ENCODE measurements at regions of chr1 and their contacts with region 1.

Region 1: GRCh38 chr1:167553136-167554027 is at the start of gene CREG1:
- DNase-seq: peak; percentile 93
- H3K4me3 Mint-ChIP-seq: peak within 1 kb of the TSS; percentile 79
- H3K27ac Mint-ChIP-seq: no peak within 1 kb of the TSS
- H3K4me1 Mint-ChIP-seq: peaks cover 40% of the 10 kb centered on the region
- H3K27me3 Mint-ChIP-seq: no peaks in the 10 kb centered on the region
- total RNA-seq, gene CREG1: 9.6 to 10.7 TPM

Region 2: GRCh38 chr1:166910396-166910994 is 642.9 kb before region 1 on chr1:
- CTCF ChIA-PET with region 1: interaction called, 3 read pairs
- intact Hi-C with region 1: loop called (anchors 5 kb)
- DNase-seq: peak; percentile 90
- H3K4me3 Mint-ChIP-seq: no peak overlapping the region
- H3K27ac Mint-ChIP-seq: no peak overlapping the region
- H3K4me1 Mint-ChIP-seq: peaks cover 5% of the 10 kb centered on the region
- H3K27me3 Mint-ChIP-seq: no peaks in the 10 kb centered on the region

Region 3: DNA sequence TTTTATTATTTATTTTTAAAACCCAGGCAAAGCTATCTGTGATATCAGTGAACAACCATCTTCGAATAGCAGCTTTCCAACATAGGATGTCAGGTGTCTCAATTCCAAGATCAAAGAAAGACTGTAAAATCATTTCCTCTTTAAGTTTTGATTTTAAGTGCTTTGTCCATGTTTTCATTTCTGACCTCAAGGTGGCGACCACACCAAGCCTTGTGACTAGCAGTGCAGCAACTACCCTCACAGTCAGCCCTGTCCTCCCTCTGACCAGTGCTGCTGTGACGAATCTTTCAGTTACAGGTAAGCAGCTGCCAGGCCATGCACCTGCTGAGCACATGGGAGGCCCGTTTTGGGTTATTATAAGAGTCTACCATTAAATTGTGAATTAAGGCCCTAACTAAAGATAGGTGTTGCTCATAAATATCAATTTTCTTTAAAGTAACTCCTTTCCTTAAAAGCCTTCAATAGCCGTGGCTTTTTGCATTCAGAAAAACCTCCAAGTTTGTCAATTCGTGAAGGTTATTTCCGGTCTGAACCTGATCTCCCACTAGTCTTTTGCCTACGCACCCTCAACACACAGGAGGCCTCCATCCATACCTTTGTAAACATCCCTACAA is 152.0 kb before region 1 on chr1:
- CTCF ChIA-PET with region 1: interaction called, 19 read pairs
- intact Hi-C with region 1: no loop called
- DNase-seq: peak; percentile 70
- H3K4me3 Mint-ChIP-seq: no peak overlapping the region
- H3K27ac Mint-ChIP-seq: no peak overlapping the region
- H3K4me1 Mint-ChIP-seq: no peaks in the 10 kb centered on the region
- H3K27me3 Mint-ChIP-seq: no peaks in the 10 kb centered on the region

Region 4: DNA sequence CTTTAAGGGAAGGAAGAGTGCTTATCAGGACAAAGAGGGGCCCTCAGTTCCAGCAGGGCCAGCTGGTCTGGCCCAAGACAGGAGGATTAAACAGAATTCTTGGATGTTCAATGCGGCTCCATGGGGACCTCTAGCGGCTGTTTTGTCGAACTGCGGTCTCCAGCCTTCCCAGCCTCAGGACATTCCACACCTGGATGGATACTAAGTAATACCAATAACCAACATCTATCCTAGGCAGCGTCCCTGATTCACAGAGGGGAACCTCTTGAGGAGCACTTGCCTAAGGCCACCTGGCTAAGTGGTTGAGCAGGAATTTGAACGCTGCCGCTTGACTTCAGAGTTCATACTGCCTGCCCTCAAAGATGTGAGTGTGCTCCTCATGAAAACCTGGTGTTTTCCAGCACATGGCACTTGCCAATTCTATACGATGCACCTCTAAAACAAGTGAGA is 19.5 kb before region 1 on chr1:
- CTCF ChIA-PET with region 1: interaction called, 14 read pairs
- intact Hi-C with region 1: no loop called
- DNase-seq: peak; percentile 78
- H3K4me3 Mint-ChIP-seq: no peak overlapping the region
- H3K27ac Mint-ChIP-seq: no peak overlapping the region
- H3K4me1 Mint-ChIP-seq: peaks cover 4% of the 10 kb centered on the region
- H3K27me3 Mint-ChIP-seq: peaks cover 2% of the 10 kb centered on the region

Region 5: GRCh38 chr1:167599957-167600581 is 46.7 kb after region 1 on chr1:
- CTCF ChIA-PET with region 1: interaction called, 5 read pairs
- intact Hi-C with region 1: loop called (anchors 1 kb)
- DNase-seq: peak; percentile 71
- H3K4me3 Mint-ChIP-seq: peak overlapping the region; percentile 45
- H3K27ac Mint-ChIP-seq: peak overlapping the region; percentile 67
- H3K4me1 Mint-ChIP-seq: peaks cover 39% of the 10 kb centered on the region
- H3K27me3 Mint-ChIP-seq: no peaks in the 10 kb centered on the region

Region 6: DNA sequence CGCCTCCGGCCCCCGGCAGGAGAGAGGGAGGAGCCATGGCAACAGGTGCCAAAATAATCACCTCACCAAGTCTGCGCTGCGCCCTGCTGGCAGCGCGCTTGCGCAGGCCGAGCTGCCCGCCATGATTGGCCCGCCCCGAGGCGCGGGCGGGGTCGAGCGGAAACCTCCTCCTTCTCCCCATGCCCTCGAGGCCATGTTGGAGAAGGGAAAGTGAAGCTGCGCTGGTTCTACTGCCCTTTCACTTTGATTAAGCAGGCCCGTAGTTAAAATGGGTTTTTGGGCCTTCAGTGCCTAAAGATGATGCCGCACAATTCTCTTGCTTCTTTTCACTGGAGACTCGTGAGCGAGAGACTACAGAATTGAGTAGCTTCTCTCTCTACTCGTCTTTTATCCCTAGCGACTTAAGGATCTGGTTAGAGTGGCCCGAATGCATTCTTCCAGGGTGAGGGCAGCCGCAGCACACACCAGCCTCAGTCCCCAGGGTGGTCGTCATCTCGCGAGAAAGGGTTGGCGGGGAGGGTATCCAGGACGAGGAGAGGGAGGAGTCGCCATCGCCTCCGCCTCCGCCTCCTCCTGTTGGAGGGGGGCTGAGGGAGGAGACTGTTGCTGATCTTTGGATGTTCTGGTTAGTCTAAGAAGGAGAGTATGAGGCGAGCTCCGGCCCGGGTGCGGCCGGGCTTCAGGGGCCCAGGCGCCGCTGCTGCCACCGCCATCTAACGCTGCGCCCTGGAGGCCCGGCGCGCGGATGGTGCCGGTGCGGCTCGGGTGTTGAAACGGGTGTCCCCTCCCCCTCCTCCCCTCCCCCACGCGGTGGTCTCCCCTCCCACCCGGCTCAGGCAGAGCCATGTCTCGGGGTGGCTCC is 382.9 kb after region 1 on chr1 and contains the start of gene DCAF6:
- CTCF ChIA-PET with region 1: no interaction called
- intact Hi-C with region 1: loop called (anchors 1 kb)
- DNase-seq: peak; percentile 97
- H3K4me3 Mint-ChIP-seq: peak within 1 kb of the TSS; percentile 85
- H3K27ac Mint-ChIP-seq: peak within 1 kb of the TSS; percentile 100
- H3K4me1 Mint-ChIP-seq: peaks cover 32% of the 10 kb centered on the region
- H3K27me3 Mint-ChIP-seq: no peaks in the 10 kb centered on the region
- total RNA-seq, gene DCAF6: 15.4 to 15.9 TPM